GM10248 (cell line): ENCODE measurements at regions of chr5 and their contacts with region 1.

Region 1: GRCh38 chr5:130871346-130872086 is 293.5 kb downstream of the HINT1 start:
- DNase-seq: peak; percentile 28
- CTCF ChIP-seq: peak; percentile 56

Region 2: GRCh38 chr5:130424341-130424740 is 447.2 kb before region 1 on chr5:
- CTCF ChIA-PET with region 1: no interaction called
- POLR2A ChIA-PET with region 1: no interaction called
- DNase-seq: no peak
- CTCF ChIP-seq: no peak

Region 3: DNA sequence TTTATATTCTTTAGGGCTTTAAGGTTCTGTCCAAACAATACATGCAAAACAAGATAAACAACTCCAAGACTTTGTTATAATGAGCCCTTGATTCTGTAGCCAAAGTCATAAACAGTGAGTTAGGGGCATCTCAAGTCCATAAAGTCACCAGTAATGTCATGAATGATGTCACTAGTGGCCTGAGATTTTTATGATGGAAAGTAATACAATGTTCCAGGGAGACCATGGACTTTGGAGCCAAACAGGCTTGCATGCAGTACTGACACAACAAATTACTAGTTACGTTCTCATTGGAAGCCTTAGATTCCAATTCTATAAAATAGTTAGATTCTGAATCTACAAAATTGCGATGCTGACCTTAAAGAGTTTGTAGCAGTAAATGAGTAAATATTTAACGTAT is 13.5 kb after region 1 on chr5:
- CTCF ChIA-PET with region 1: interaction called, 19 read pairs
- POLR2A ChIA-PET with region 1: no interaction called
- DNase-seq: no peak
- CTCF ChIP-seq: no peak

Region 4: DNA sequence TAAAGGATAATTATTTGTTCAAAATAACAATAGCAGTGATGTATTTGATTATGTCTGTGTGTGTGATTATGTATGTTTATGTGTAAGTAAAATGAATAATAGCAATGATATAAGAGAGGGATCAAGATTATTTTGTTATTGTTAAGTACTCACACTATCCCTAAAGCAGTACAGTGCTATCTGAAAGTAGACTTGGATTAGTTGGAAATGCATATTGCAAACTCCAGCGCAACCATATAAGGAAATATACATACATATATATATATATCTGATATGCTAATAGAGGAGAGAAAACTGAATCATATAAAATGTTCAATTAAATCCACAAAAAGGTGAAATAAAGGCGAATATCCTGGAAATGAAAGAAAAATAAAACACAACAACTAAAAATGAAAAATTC is 25.1 kb after region 1 on chr5:
- CTCF ChIA-PET with region 1: no interaction called
- POLR2A ChIA-PET with region 1: no interaction called
- DNase-seq: no peak
- CTCF ChIP-seq: no peak

Region 5: DNA sequence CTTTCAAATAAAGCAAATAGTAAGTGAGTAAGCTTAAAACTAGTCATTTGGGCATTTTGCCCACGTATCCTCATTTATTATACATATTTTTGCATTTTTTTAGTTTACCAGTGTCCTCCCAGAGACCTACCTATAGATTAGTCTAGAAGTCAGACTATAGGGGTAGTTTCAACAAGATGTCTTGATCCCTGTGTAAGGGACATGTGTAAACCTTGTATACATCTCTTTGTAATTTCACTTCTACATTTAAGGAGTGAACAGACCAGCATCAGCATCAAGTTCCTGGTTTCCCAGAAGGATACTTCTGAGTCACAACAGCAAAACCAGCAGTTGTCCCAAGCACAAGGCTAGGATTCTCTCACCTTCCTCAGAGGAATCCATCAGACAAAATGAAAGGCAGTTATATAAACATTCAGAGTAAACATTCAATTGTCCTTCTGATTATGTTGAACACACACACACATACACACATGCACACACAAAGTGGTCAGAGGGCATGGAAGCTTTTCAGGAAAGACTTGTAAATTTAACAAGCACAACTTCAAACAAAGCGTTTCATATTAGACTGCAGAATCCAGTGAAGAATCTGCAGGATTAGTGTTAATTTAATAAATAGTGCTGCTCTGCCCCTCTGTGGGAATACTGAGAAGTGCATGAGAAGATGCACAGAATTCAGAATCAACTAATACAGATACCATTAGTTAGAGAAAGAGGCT is 238.2 kb after region 1 on chr5:
- CTCF ChIA-PET with region 1: interaction called, 11 read pairs
- POLR2A ChIA-PET with region 1: no interaction called
- DNase-seq: peak; percentile 53
- CTCF ChIP-seq: peak; percentile 79

Region 6: GRCh38 chr5:131417240-131417869 is 545.8 kb after region 1 on chr5:
- CTCF ChIA-PET with region 1: interaction called, 15 read pairs
- POLR2A ChIA-PET with region 1: no interaction called
- DNase-seq: peak; percentile 63
- CTCF ChIP-seq: peak; percentile 66

Region 7: DNA sequence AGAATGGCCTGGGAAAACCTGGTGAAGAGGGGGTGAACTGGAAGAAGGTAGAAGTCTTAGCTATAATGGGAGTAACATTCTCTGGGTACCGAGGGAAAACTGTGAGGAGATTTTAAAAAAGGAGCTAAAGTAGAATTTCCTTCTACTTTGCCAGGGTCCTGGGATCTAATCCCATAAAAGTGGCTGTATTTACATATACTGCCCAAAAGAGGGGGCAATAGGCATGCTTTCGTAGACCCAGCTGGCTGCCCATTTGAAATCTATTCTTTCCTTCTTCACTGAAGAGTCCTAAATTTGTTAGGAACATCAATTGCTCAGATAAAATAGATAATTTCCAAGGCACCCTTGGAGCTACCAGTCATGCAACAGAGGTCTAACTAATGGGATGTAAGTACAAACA is 551.5 kb after region 1 on chr5:
- CTCF ChIA-PET with region 1: interaction called, 15 read pairs
- POLR2A ChIA-PET with region 1: no interaction called
- DNase-seq: no peak
- CTCF ChIP-seq: peak; percentile 42